Caco-2 (cell line): ENCODE measurements at regions of chr11 and their contacts with region 1.

Region 1: GRCh38 chr11:111841370-111842053 is 29.9 kb downstream of the ALG9 start:
- DNase-seq: peak; percentile 91 to 94
- H3K4me3 ChIP-seq: no peak overlapping the region
- H3K4me3 Mint-ChIP-seq: no peak overlapping the region
- H3K27ac Mint-ChIP-seq: no peak overlapping the region
- H3K4me1 ChIP-seq: peaks cover 19% of the 10 kb centered on the region
- H3K4me1 Mint-ChIP-seq: peaks cover 20% of the 10 kb centered on the region
- H3K27me3 ChIP-seq: no peaks in the 10 kb centered on the region
- H3K27me3 Mint-ChIP-seq: no peaks in the 10 kb centered on the region
- CTCF ChIP-seq: peak; percentile 96 to 98

Region 2: GRCh38 chr11:111565114-111565720 is 276.3 kb before region 1 on chr11:
- CTCF ChIA-PET with region 1: no interaction called
- POLR2A ChIA-PET with region 1: no interaction called
- intact Hi-C with region 1: loop called (anchors 1 kb)
- DNase-seq: peak; percentile 73 to 86
- H3K4me3 ChIP-seq: no peak overlapping the region
- H3K4me3 Mint-ChIP-seq: no peak overlapping the region
- H3K27ac Mint-ChIP-seq: no peak overlapping the region
- H3K4me1 ChIP-seq: no peaks in the 10 kb centered on the region
- H3K4me1 Mint-ChIP-seq: peaks cover 7% of the 10 kb centered on the region
- H3K27me3 ChIP-seq: no peaks in the 10 kb centered on the region
- H3K27me3 Mint-ChIP-seq: no peaks in the 10 kb centered on the region
- CTCF ChIP-seq: peak; percentile 93 to 98

Region 3: GRCh38 chr11:111688028-111688427 is 153.5 kb before region 1 on chr11:
- CTCF ChIA-PET with region 1: interaction called, 10 read pairs
- POLR2A ChIA-PET with region 1: no interaction called
- intact Hi-C with region 1: no loop called
- DNase-seq: no peak
- H3K4me3 ChIP-seq: no peak overlapping the region
- H3K4me3 Mint-ChIP-seq: no peak overlapping the region
- H3K27ac Mint-ChIP-seq: no peak overlapping the region
- H3K4me1 ChIP-seq: 0 out of 2 replicates have a peak, but pooled peaks cover 3% of the 10 kb centered on the region
- H3K4me1 Mint-ChIP-seq: peaks cover 25% of the 10 kb centered on the region
- H3K27me3 ChIP-seq: no peaks in the 10 kb centered on the region
- H3K27me3 Mint-ChIP-seq: no peaks in the 10 kb centered on the region
- CTCF ChIP-seq: no peak

Region 4: DNA sequence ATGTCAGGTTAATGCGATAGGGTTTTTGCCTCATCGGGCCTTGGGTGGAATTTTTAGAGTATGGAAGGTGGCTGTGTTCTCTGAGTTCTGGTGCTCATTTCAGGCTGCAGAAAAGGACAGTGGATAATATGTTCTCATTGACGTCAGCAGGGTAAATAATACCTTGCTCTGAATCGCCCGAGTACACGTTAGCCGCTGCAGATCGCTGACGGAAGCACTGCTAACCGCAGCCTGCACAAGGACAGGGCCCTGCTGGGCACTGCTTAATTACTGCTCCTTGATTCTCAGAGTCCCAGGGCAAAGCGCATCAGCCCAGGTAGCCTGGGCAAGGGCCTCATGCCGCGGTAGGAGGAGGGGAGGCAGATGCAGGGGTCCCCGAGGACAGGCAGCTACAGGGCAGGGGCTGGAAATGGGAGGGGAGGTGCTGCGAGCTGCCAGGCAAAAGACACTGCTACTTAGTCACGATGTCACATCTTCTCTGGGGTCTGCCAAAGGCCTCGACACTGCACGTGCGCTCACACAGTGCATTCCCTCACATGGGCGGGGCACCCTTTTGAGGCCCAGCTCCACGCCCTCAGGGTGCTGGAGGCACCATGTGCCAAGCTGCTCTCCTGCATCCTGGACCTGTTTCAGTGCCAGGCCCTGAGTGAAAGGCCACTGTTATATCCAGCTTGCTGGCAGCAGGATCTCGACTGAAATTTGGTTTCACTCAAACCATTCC is 110.5 kb before region 1 on chr11:
- CTCF ChIA-PET with region 1: no interaction called
- POLR2A ChIA-PET with region 1: no interaction called
- intact Hi-C with region 1: loop called (anchors 2 kb)
- DNase-seq: no peak
- H3K4me3 ChIP-seq: no peak overlapping the region
- H3K4me3 Mint-ChIP-seq: no peak overlapping the region
- H3K27ac Mint-ChIP-seq: peak overlapping the region; percentile 60
- H3K4me1 ChIP-seq: no peaks in the 10 kb centered on the region
- H3K4me1 Mint-ChIP-seq: no peaks in the 10 kb centered on the region
- H3K27me3 ChIP-seq: no peaks in the 10 kb centered on the region
- H3K27me3 Mint-ChIP-seq: no peaks in the 10 kb centered on the region
- CTCF ChIP-seq: no peak

Region 5: DNA sequence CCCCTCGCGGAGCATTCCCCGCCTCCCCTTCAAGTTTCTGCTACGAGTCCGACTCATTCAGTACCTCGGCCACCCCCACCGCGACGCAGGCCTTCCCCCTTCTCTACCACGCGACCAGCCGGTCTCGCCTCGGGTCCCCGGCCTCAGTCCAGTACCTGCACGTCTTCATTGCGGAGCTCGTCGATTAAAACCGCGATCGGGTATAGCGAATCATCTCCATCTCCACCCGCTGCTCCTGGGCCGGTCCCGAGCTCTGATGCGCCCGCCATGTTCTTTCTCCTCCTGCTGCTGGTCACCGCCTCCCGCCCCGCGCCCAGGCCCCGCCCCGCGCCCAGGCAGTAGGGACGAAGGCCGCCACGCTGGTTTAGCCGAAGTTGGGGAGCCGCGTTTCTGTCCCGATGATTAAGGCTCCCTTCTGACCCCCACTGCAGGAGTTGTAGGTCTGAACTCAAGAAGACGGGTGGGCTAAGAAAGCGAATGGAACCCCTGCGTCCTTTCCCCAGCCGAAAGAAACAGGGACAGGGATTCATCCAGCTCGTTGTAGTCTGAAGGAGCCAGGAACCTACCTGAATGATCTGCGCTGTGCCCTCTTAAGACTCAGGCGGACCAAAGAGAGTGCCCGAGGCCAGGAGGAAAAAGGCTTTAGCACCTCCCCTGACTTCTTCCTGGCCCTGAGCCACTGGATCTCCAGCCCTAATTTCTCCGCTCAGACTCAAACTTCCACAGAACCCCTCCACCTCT is 75.2 kb before region 1 on chr11 and contains the start of gene PPP2R1B:
- CTCF ChIA-PET with region 1: interaction called, 5 read pairs
- POLR2A ChIA-PET with region 1: no interaction called
- intact Hi-C with region 1: loop called (anchors 2 kb)
- DNase-seq: peak; percentile 84 to 85
- H3K4me3 ChIP-seq: peak within 1 kb of the TSS; percentile 61
- H3K4me3 Mint-ChIP-seq: peak within 1 kb of the TSS; percentile 85
- H3K27ac Mint-ChIP-seq: peak within 1 kb of the TSS; percentile 84
- H3K4me1 ChIP-seq: peaks cover 10% of the 10 kb centered on the region
- H3K4me1 Mint-ChIP-seq: peaks cover 22% of the 10 kb centered on the region
- H3K27me3 ChIP-seq: no peaks in the 10 kb centered on the region
- H3K27me3 Mint-ChIP-seq: no peaks in the 10 kb centered on the region
- CTCF ChIP-seq: no peak
- total RNA-seq, gene PPP2R1B: 109 and 114 TPM in 2 replicates

Region 6: DNA sequence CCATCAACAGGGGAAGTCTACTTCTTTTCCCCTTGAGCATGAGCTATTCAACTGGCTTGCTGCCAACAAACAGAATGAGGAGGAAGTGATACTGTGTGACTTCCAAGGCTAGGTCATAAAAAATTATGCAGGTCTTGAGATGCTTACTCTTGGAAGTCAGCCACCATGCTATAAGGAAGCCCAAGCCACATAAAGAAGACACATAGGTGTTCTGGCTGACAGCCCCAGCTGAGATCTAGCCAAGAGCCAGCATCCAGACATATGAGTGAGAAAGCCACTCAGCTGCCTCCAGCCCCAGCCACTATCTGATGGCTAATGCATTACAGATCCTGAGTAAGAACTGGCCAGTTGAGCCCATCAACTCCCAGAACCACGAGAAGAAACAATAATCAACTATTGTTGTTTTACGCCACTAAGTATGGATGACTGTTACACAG is 44.3 kb before region 1 on chr11:
- CTCF ChIA-PET with region 1: interaction called, 4 read pairs
- POLR2A ChIA-PET with region 1: interaction called, 4 read pairs
- intact Hi-C with region 1: loop called (anchors 1 kb)
- DNase-seq: no peak
- H3K4me3 ChIP-seq: no peak overlapping the region
- H3K4me3 Mint-ChIP-seq: no peak overlapping the region
- H3K27ac Mint-ChIP-seq: no peak overlapping the region
- H3K4me1 ChIP-seq: peaks cover 20% of the 10 kb centered on the region
- H3K4me1 Mint-ChIP-seq: peaks cover 21% of the 10 kb centered on the region
- H3K27me3 ChIP-seq: no peaks in the 10 kb centered on the region
- H3K27me3 Mint-ChIP-seq: no peaks in the 10 kb centered on the region
- CTCF ChIP-seq: no peak